ENCODE measurements at regions of chr12 and their contacts with region 1.

Region 1: GRCh38 chr12:124734224-124734788 is 129.4 kb downstream of the SCARB1 start:
- DNase-seq: peak; percentile 53

Region 2: DNA sequence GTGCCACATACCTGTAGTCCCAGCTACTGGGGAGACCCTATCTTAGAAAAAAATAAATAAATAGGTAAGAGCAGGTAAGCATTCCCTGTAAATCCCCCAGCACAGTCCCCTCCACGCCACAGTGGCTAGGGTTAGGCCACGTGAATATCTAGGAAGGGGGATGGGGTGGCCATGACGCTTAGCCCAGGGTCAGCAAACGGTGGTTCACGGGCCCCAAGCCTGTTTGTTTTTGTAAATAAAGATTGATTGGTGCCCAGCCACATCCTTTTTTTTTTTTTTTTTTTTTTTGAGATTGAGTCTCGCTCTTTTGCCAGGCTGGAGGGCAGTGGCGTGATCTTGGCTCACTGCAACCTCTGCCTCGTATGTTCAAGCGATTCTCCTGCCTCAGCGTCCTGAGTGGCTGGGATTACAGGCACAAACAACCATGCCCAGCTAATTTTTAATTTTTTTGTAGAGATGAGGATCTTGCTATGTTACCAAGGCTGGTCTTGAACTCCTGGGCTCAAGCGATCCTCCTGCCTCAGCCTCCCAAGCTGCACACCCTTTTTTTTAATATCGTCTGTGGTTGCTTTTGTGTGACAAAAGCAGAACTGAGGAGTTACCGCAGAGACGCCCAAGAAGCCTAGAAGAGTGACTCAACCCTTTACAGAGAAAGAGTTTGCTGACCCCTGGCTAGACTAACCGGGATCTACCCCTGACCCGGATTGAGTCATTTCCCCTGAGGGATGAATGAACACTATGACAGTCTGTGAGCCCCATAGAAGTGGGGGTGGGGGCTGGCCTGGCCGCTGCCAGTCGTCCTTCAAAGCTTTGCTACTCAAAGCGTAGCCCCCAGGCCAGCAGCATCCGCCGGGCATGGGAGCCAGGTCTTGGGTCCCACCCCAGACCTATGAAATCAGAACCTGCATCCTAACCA is 53.2 kb before region 1 on chr12:
- in situ Hi-C with region 1: loop called (anchors 10 kb)
- DNase-seq: no peak

Region 3: GRCh38 chr12:124814741-124815613 is 80.7 kb after region 1 on chr12:
- in situ Hi-C with region 1: no loop called
- DNase-seq: no peak

Measured in G401 (cell line).